CD4-positive, alpha-beta T cell (primary cell): ENCODE measurements at regions of chr2 and their contacts with region 1.

Region 1: DNA sequence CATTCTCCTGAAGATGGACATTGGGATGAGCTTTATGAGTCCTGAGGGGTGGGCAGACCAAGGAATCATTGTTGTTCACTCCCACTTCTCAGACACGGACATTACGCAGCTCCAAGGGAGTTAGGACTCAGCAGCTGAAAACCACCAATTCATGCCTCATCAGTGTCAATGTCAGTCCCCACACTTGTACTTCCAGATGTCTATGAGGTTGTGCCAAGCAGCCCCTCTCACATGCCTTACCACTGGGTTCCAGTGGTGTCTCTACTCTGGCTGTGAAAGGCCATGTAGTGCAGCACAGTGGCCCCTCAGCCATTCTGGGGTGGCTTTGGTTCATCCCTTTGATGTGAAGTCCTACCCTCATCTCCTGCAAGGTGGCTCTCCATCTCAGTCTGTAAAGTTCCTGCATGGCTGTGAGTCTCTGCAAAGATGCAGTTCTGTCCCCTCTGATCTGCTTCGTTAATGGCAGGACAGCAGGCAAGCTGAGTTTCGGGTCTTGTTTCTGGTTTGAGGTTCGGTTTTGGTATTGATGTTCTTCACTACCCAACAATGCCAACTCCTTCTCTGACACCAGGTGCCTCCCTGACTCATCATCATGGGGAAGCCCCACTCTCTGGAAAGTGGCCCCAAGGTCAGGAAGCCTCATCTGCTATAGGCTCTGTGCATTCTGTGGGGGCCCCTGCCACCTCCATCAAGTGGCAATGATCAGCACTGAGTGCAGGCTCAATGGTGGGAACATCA is 14.0 kb upstream of the COL6A3 start:
- DNase-seq: peak in 11 of 14 experiments; percentile 33 to 70 (median 49)
- ATAC-seq: peak; percentile 39
- H3K4me3 ChIP-seq: no peak overlapping the region
- H3K4me3 Mint-ChIP-seq: peak overlapping the region; percentile 60
- H3K27ac ChIP-seq: peak overlapping the region in 1 of 2 donors; percentile 13
- H3K27ac Mint-ChIP-seq: peak overlapping the region; percentile 88
- H3K4me1 ChIP-seq: peaks cover 42% of the 10 kb centered on the region
- H3K4me1 Mint-ChIP-seq: peaks cover 94% of the 10 kb centered on the region
- H3K27me3 ChIP-seq: no peaks in the 10 kb centered on the region
- H3K27me3 Mint-ChIP-seq: no peaks in the 10 kb centered on the region
- CTCF ChIP-seq: no peak

Region 2: GRCh38 chr2:237441605-237442274 is 13.8 kb after region 1 on chr2:
- CTCF ChIA-PET with region 1: no interaction called
- POLR2A ChIA-PET with region 1: interaction called, 11 read pairs
- intact Hi-C with region 1: loop called in 1 of 2 experiments (anchors 2 kb)
- DNase-seq: peak in 5 of 14 experiments; percentile 37 to 73 (median 55)
- ATAC-seq: peak; percentile 96
- H3K4me3 ChIP-seq: no peak overlapping the region
- H3K4me3 Mint-ChIP-seq: peak overlapping the region; percentile 23
- H3K27ac ChIP-seq: no peak overlapping the region
- H3K27ac Mint-ChIP-seq: peak overlapping the region; percentile 72
- H3K4me1 ChIP-seq: peaks cover 46% of the 10 kb centered on the region
- H3K4me1 Mint-ChIP-seq: peaks cover 78% of the 10 kb centered on the region
- H3K27me3 ChIP-seq: no peaks in the 10 kb centered on the region
- H3K27me3 Mint-ChIP-seq: no peaks in the 10 kb centered on the region
- CTCF ChIP-seq: no peak